ENCODE measurements at regions of chr19 and their contacts with region 1.

Region 1: DNA sequence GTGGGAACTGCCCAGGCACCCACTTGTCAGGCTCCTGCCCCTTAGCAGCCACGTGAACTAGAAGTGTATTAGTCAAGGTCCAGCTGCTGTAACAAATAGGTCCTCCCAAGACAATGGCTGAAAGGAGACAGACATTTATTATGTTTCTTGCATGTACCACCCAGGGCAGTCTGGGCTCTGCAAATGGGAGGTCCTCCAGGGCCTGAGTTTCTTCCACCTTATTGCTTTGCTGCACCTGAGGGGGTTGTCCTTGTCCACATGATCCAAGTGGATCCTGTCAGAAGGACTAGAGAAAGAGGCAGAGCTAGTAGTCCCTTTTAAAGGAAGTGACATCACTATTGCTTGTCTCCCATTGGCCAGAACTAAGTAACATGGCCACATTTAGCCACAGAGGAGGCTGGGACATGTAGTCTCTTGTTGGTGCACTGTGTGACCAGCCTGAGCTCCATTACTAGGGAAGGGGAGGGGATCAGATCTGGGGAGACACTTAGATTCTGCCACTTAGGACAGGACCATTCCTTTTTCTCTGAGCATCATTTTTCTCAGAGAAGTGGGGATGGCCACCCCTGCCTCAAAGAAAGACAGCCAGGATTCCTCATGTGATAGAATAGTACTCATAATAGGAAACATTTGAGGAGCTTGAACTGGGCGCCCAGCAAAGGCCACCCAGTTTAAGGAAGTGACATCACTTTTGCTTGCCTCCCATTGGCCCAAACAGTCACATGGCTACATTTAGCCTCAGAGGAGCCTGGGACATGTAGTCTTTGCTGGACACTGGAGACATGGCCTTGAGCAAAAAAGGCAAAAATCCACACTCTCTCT is 15.2 kb downstream of the CC2D1A start:
- DNase-seq: peak; percentile 44
- ATAC-seq: peak; percentile 79
- H3K4me3 ChIP-seq: no peak overlapping the region
- H3K27ac ChIP-seq: no peak overlapping the region
- H3K4me1 ChIP-seq: peaks cover 2% of the 10 kb centered on the region; the same call in 1 of the 2 replicates
- H3K27me3 ChIP-seq: no peaks in the 10 kb centered on the region
- CTCF ChIP-seq: no peak
- POLR2A ChIP-seq: no peak
- RAD21 ChIP-seq: no peak

Region 2: DNA sequence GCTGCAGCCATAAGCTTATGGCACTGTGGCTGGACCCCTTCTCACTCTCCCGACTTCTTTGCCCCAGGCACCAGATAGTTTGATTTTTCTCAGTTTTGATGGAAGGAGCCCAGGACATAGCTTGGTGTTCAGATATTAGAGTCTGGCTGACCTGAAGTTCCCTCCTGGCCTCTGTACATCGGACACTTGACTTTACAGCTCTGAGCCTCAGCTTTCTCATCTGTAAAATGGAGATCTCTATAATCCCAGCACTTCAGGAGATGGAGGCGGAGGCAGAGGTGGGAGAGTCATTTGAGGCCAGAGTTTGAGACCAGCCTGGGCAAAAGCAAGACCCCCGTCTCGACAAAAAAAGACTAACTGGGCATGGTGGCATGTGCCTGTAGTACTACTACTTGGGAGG is 14.2 kb before region 1 on chr19:
- CTCF ChIA-PET with region 1: interaction called, 3 read pairs
- POLR2A ChIA-PET with region 1: interaction called, 3 read pairs
- dilution Hi-C with region 1: no loop called
- in situ Hi-C with region 1: no loop called
- intact Hi-C with region 1: loop called (anchors 1 kb)
- DNase-seq: no peak
- ATAC-seq: no peak
- H3K4me3 ChIP-seq: peak overlapping the region; percentile 97
- H3K27ac ChIP-seq: no peak overlapping the region
- H3K4me1 ChIP-seq: no peaks in the 10 kb centered on the region; the same call in 1 of the 2 replicates
- H3K27me3 ChIP-seq: no peaks in the 10 kb centered on the region
- CTCF ChIP-seq: no peak
- POLR2A ChIP-seq: no peak
- RAD21 ChIP-seq: no peak

Region 3: DNA sequence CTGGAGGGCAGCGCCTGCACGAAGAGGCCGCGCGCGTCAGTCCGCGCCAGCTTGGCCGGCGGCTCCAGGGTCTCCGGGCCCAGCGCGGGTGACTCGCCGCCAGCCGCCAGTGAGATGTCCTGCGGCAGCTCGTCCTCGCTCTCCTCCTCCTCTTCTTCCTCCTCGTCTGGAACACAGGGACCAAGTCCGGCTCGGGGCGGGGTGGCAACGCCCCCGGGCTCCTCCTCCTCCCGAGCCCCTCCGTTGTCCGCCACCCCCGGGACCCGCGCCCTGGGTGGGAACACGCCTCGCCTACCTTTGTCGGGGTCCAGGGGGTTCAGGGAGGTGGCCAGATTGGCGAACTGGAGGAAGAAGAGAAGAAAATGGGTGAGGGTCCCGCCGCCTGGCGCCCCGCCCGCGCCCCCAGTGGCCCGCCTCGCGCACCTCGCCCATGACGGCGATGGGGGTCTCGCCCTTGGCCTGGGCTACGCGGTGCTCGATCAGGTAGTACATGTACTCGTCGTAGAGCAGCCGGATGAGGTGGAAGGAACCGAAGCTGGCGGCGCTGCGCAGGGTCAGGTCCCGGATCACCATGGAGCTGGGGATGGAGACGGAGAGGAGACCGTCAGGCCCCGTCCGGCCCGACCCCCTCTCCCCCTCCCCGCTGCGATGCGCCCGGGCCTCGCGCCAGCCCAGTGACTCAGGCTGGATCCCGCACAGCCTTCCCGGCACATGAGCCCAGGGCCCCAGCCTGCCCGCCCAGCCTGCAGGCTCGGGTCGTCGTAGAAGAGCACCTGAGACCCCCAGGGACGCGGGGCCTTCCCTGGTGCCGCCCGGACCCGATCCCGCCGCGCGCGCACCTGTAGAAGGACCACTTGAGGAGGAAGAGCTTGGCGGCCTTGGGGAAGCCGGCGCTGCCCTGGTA is 41.8 kb after region 1 on chr19:
- CTCF ChIA-PET with region 1: no interaction called
- POLR2A ChIA-PET with region 1: no interaction called
- dilution Hi-C with region 1: no loop called
- in situ Hi-C with region 1: no loop called
- intact Hi-C with region 1: no loop called
- DNase-seq: peak; percentile 60
- ATAC-seq: peak; percentile 72
- H3K4me3 ChIP-seq: no peak overlapping the region
- H3K27ac ChIP-seq: no peak overlapping the region
- H3K4me1 ChIP-seq: peaks cover 9% of the 10 kb centered on the region
- H3K27me3 ChIP-seq: no peaks in the 10 kb centered on the region
- CTCF ChIP-seq: no peak
- POLR2A ChIP-seq: no peak
- RAD21 ChIP-seq: no peak

Measured in IMR-90 (cell line).